HAP-1 (cell line): ENCODE measurements at regions of chr1 and their contacts with region 1.

Region 1: GRCh38 chr1:112619520-112620376 is at the start of gene CAPZA1:
- DNase-seq: peak; percentile 79 to 90
- H3K4me3 ChIP-seq: peak within 1 kb of the TSS; percentile 76
- H3K4me1 ChIP-seq: peaks cover 28% of the 10 kb centered on the region
- H3K27me3 ChIP-seq: no peaks in the 10 kb centered on the region

Region 2: GRCh38 chr1:112369392-112370285 is 250.1 kb before region 1 on chr1:
- in situ Hi-C with region 1: no loop called
- DNase-seq: peak; percentile 63 to 93
- H3K4me3 ChIP-seq: no peak overlapping the region
- H3K4me1 ChIP-seq: no peaks in the 10 kb centered on the region
- H3K27me3 ChIP-seq: peaks cover 14% of the 10 kb centered on the region

Region 3: GRCh38 chr1:112439592-112439991 is 180.2 kb before region 1 on chr1:
- in situ Hi-C with region 1: no loop called
- DNase-seq: no peak
- H3K4me3 ChIP-seq: no peak overlapping the region
- H3K4me1 ChIP-seq: no peaks in the 10 kb centered on the region
- H3K27me3 ChIP-seq: no peaks in the 10 kb centered on the region

Region 4: GRCh38 chr1:112706908-112707663 is 87.3 kb after region 1 on chr1 and contains the start of gene RHOC:
- in situ Hi-C with region 1: loop called (anchors 5 kb)
- DNase-seq: peak; percentile 88 to 95
- H3K4me3 ChIP-seq: peak within 1 kb of the TSS; percentile 88
- H3K4me1 ChIP-seq: peaks cover 19% of the 10 kb centered on the region
- H3K27me3 ChIP-seq: no peaks in the 10 kb centered on the region